HCT116 (cell line): ENCODE measurements at regions of chr11 and their contacts with region 1.

Region 1: DNA sequence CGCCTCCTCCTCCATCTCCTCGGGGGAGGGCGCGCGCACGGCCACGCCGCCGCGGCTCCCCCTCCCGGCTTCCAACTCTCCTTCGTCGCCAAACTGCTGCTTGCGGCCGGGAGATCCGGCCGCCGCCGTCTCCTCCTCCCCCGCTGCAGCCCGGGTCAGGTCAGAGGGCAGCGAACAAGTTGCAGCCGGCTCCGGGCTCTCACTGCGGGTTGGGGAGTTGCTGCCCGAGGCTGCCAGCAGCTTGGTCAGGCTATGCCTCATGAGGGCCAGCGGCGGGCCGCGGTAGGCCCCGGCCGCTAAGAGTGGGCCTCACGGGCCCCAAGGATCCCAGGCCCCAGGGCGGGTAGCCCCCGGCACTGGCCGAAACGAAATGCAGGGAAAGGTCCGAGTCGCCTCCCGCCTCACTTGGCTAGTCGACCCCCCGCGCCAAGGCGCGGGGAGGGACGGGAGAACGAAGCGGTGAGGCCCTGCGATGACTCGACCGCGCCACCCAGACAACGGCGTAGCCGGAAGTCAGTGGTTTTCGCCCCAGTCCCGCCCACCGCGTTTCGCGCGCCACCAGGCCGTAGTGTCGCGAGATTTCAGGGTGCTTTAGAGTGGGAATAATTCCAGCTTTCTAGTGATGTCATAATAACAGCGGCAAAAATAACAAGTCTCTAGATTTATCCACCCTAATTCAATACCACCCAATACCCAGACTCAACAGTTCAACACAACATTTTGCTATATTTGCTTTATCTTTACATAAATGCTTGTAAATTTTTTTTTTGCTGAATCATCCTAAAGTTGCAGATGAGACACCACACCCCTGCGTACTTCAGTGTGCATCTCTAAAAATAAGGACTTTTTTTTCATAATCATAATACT is at the start of gene CREBZF:
- DNase-seq: peak; percentile 87
- ATAC-seq: peak; percentile 92
- H3K4me3 ChIP-seq: peak within 1 kb of the TSS; percentile 82 to 91
- H3K27ac ChIP-seq: peak within 1 kb of the TSS; percentile 94
- H3K4me1 ChIP-seq: peaks cover 6 to 23% of the 10 kb centered on the region in 2 experiments; a peak in 3 of 4 replicates
- H3K27me3 ChIP-seq: no peaks in the 10 kb centered on the region
- CTCF ChIP-seq: no peak
- POLR2A ChIP-seq: no peak
- RAD21 ChIP-seq: no peak
- total RNA-seq, gene CREBZF: 40.2 TPM

Region 2: DNA sequence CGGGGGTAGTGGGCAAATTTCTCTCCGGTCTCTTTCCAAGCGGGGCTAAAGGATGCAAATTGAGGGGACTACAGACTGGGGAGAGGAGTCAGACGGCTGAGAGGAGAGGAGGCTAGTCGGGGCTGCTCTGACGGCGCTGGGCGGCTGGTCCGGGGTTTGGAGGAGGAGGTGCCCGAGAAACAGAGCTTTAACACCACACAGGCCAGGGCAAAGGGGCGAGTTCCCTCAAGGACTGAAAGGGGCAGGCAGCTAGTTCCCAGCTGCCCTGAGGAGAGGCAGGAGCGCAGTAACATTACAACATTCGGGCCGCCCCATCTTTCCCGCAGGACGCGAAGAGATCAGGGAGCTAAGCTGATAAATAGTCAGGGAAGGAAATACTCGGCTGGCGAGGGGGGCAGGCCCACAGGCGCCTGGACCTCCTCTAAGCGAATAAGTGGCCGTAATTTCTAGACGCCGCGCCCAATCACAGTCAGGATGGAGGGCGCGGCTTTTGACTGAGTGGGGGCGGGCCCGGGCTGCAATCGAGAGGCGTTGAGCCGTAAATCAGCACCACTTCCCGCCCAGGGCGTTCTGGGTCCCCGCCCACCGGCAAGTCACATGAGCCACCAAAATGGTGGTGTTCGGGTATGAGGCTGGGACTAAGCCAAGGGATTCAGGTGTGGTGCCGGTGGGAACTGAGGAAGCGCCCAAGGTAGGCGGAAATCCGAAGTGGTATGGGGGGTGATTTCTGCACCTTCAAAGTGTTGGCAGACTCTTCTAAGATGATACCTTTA is 36.7 kb before region 1 on chr11 and contains the start of gene TMEM126B:
- CTCF ChIA-PET with region 1: no interaction called
- POLR2A ChIA-PET with region 1: interaction called, 4 read pairs
- RAD21 ChIA-PET with region 1: no interaction called
- intact Hi-C with region 1: loop called (anchors 2 kb)
- DNase-seq: peak; percentile 91
- ATAC-seq: peak; percentile 99
- H3K4me3 ChIP-seq: peak within 1 kb of the TSS; percentile 79 to 95
- H3K27ac ChIP-seq: peak within 1 kb of the TSS; percentile 47
- H3K4me1 ChIP-seq: peaks cover 6 to 19% of the 10 kb centered on the region in 2 experiments; a peak in 3 of 4 replicates
- H3K27me3 ChIP-seq: no peaks in the 10 kb centered on the region
- CTCF ChIP-seq: no peak
- POLR2A ChIP-seq: peak; percentile 81
- RAD21 ChIP-seq: no peak
- total RNA-seq, gene TMEM126B: 49.0 TPM